Activated T-helper 1 cell treated with anti-CD3 and anti-CD28 coated beads, Interleukin-12 subunit alpha, Interleukin-12 subunit beta, Interleukin-2, Interleukin-4 antibody, amounts not matched to agents 30 ng/mL and 10 ng/mL and 1 ng/mL, durations not matched to agents 14 hours and 24 hours and 36 hours (primary cell): ENCODE measurements at regions of chr12 and their contacts with region 1.

Region 1: GRCh38 chr12:9647825-9648700 is 21.4 kb upstream of the CLEC2D start:
- DNase-seq: peak; percentile 93
- H3K4me3 Mint-ChIP-seq: peak overlapping the region; percentile 93
- H3K27ac Mint-ChIP-seq: peak overlapping the region; percentile 97
- H3K4me1 Mint-ChIP-seq: peaks cover 75% of the 10 kb centered on the region
- H3K27me3 Mint-ChIP-seq: peaks cover 3% of the 10 kb centered on the region

Region 2: GRCh38 chr12:9244894-9245293 is 403.2 kb before region 1 on chr12:
- intact Hi-C with region 1: loop called (anchors 10 kb)
- DNase-seq: no peak
- H3K4me3 Mint-ChIP-seq: peak overlapping the region; percentile 66
- H3K27ac Mint-ChIP-seq: peak overlapping the region; percentile 95
- H3K4me1 Mint-ChIP-seq: peaks cover 23% of the 10 kb centered on the region
- H3K27me3 Mint-ChIP-seq: peaks cover 2% of the 10 kb centered on the region

Region 3: GRCh38 chr12:9662500-9662899 is 14.4 kb after region 1 on chr12:
- intact Hi-C with region 1: no loop called
- DNase-seq: no peak
- H3K4me3 Mint-ChIP-seq: peak overlapping the region; percentile 31
- H3K27ac Mint-ChIP-seq: peak overlapping the region; percentile 76
- H3K4me1 Mint-ChIP-seq: peaks cover 82% of the 10 kb centered on the region
- H3K27me3 Mint-ChIP-seq: no peaks in the 10 kb centered on the region

Region 4: DNA sequence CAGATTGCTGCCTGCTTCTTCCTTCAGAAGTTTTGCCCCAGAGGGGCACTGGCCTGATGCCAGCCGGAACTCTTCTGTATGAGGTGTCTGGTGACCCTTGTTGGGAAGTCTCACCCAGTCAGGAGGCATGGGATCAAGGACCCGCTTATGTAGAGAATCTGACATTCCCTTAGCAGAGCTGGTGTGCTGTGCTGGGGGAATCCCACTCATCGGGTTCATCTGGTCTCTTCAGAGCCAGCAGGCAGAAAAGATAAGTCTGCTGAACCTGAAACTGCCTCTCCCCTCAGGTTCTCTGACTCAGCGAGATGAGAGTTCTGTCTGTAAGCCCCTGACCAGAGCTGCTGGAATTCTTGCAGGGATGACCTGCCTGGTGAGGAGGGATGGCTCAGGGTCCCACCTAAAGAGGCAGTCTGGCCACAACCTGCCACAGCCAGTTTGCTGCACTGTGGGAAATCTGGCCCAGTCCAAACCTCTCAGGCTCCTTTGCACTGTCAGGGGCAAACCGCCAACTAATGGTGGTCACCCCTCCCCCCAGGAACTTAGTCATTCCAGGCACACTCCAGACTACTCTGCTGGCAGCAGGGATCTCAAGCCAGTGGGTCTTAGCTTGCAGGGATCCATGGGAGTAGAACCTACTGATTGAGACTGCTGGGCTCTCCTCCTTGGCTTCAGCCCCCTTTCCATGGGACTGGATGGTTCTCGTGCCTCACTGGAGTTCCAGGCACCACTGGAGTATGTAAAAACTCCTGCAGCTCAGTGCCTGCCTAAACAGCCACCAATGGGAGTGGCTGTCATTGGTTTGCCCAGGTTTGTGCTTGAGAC is 25.6 kb after region 1 on chr12:
- intact Hi-C with region 1: loop called (anchors 1 kb)
- DNase-seq: no peak
- H3K4me3 Mint-ChIP-seq: peak overlapping the region; percentile 90
- H3K27ac Mint-ChIP-seq: peak overlapping the region; percentile 97
- H3K4me1 Mint-ChIP-seq: peaks cover 73% of the 10 kb centered on the region
- H3K27me3 Mint-ChIP-seq: no peaks in the 10 kb centered on the region

Region 5: DNA sequence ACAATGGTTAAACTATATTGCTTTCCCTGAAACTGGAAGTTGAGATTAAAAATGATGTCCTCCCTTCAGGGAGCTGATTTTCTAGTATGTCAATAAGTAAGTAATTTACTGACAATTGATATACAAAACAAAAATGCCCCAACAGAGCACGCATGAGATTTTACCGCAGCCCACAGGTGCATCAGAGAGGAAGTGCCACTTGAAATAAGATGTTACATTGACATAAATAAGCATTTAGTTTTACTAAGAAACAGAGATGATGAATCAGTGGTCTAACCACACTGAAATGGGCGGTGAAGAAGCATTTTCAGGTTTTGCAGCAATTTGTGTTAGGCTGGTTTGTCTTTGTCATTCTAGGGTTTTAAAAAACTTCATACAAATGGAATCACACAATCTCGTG is 93.7 kb after region 1 on chr12:
- intact Hi-C with region 1: loop called (anchors 1 kb)
- DNase-seq: peak; percentile 81
- H3K4me3 Mint-ChIP-seq: peak overlapping the region; percentile 70
- H3K27ac Mint-ChIP-seq: peak overlapping the region; percentile 86
- H3K4me1 Mint-ChIP-seq: peaks cover 72% of the 10 kb centered on the region
- H3K27me3 Mint-ChIP-seq: no peaks in the 10 kb centered on the region

Region 6: DNA sequence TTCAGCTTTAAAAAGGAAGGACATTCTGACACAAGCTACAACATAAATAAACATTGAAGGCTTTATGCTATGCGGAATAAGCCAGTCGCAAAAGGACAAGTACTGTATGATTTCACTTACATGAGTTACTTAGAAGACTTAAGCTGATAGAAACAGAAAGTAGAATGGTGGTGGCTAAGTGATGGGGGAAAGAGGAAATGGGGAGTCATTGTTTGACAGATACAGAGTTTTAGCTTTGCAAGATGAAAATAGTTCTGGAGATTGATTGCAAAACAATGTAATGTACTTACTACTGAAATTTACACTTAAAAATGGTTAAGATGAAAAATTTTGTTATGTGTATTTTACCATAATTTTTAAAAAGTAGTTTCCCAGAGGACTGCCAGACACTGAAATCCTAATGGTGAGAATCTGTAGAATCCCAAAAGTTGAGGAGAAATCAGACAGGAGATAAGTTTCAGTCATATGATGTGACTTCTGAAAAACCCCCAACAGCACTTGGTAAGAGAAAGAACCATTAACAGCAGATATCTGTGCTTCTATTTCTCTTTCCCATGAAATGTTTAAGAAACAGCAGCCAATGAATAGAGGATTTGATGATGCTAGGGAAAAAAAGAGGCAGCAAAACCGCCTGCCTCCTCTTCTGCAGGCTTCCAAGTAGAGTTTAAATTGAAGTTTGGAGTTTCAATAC is 300.7 kb after region 1 on chr12:
- intact Hi-C with region 1: loop called (anchors 10 kb)
- DNase-seq: no peak
- H3K4me3 Mint-ChIP-seq: no peak overlapping the region
- H3K27ac Mint-ChIP-seq: peak overlapping the region; percentile 18
- H3K4me1 Mint-ChIP-seq: peaks cover 54% of the 10 kb centered on the region
- H3K27me3 Mint-ChIP-seq: peaks cover 4% of the 10 kb centered on the region

Region 7: GRCh38 chr12:10721651-10722501 is 1073.8 kb after region 1 on chr12:
- intact Hi-C with region 1: loop called (anchors 10 kb)
- DNase-seq: peak; percentile 53
- H3K4me3 Mint-ChIP-seq: peak overlapping the region; percentile 96
- H3K27ac Mint-ChIP-seq: peak overlapping the region; percentile 96
- H3K4me1 Mint-ChIP-seq: peaks cover 60% of the 10 kb centered on the region
- H3K27me3 Mint-ChIP-seq: peaks cover 34% of the 10 kb centered on the region